ENCODE measurements at regions of chr7 and their contacts with region 1.

Region 1: DNA sequence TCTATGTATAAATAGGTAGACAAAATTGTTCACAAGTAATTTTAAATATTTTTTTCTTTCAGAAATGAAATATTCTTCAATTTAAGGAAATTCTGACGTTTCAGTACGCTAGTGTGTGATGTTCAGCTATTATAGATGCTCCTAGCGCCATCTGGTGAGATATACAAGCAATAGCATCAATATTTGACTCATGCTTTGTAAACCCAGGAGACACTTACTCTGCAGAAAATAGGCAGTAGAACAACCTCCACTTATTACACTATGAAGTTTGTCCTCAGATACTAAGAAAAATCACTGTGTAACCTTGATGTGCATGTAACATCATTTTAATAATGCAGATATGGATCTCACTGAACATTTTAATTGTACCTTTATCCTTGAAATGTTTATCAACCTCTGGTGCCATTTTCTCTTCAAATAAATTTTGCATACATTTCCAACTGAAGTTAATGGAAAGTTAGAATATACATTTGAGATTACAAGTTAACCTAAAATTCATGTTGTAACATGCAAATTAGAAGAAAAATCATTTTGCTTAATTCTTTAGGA is 151.5 kb upstream of the FAM3C start:
- DNase-seq: no peak
- H3K4me3 Mint-ChIP-seq: no peak overlapping the region
- H3K27ac Mint-ChIP-seq: no peak overlapping the region
- H3K4me1 Mint-ChIP-seq: peaks cover 24% of the 10 kb centered on the region
- H3K27me3 Mint-ChIP-seq: no peaks in the 10 kb centered on the region
- CTCF ChIP-seq: peak; percentile 31

Region 2: GRCh38 chr7:121366852-121367431 is 180.7 kb before region 1 on chr7:
- CTCF ChIA-PET with region 1: interaction called, 7 read pairs
- intact Hi-C with region 1: loop called (anchors 1 kb)
- DNase-seq: peak; percentile 15
- H3K4me3 Mint-ChIP-seq: no peak overlapping the region
- H3K27ac Mint-ChIP-seq: no peak overlapping the region
- H3K4me1 Mint-ChIP-seq: peaks cover 28% of the 10 kb centered on the region
- H3K27me3 Mint-ChIP-seq: no peaks in the 10 kb centered on the region
- CTCF ChIP-seq: peak; percentile 39

Region 3: GRCh38 chr7:121437456-121438127 is 110.0 kb before region 1 on chr7:
- CTCF ChIA-PET with region 1: interaction called, 3 read pairs
- intact Hi-C with region 1: loop called (anchors 5 kb)
- DNase-seq: no peak
- H3K4me3 Mint-ChIP-seq: no peak overlapping the region
- H3K27ac Mint-ChIP-seq: peak overlapping the region; percentile 56
- H3K4me1 Mint-ChIP-seq: peaks cover 26% of the 10 kb centered on the region
- H3K27me3 Mint-ChIP-seq: no peaks in the 10 kb centered on the region
- CTCF ChIP-seq: no peak

Region 4: GRCh38 chr7:121744319-121744718 is 196.7 kb after region 1 on chr7:
- CTCF ChIA-PET with region 1: interaction called, 3 read pairs
- intact Hi-C with region 1: loop called (anchors 10 kb)
- DNase-seq: peak; percentile 25
- H3K4me3 Mint-ChIP-seq: peak overlapping the region; percentile 67
- H3K27ac Mint-ChIP-seq: peak overlapping the region; percentile 99
- H3K4me1 Mint-ChIP-seq: peaks cover 38% of the 10 kb centered on the region
- H3K27me3 Mint-ChIP-seq: no peaks in the 10 kb centered on the region
- CTCF ChIP-seq: no peak